ENCODE measurements at regions of chr1 and their contacts with region 1.

Region 1: DNA sequence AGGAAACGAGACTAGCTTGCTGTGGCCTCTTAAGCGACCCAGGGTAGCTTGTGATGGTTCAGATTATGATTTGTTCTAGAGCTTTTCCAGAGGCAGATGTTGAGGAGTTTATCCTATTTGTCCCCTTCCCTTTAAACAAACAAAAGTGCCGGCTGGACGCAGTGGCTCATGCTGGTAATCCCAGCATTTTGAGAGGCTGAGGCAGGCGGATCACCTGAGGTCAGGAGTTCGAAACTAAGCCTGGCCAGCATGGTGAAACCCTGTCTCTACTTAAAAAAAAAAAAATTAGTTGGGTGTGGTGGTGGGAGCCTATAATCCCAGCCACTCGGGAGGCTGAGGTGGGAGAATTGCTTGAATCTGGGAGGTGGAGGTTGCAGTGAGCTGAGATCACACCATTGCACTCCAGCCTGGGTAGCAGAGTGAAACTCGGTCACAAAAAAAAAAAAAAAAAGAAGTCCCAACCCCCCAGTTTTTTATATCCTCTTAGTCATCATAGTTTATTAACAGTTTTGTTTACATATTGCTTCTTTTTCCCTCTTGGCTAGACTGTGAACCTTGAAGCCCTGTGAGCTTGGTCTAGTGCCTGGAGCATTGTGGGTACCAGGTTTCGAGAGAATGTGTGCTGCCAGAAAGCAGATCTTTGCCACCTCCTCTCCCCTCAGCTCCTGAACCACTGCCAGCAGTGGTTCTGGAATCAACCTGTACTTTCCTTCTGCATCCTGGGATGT is 29.8 kb downstream of the MAPKAPK2 start:
- DNase-seq: no peak

Region 2: DNA sequence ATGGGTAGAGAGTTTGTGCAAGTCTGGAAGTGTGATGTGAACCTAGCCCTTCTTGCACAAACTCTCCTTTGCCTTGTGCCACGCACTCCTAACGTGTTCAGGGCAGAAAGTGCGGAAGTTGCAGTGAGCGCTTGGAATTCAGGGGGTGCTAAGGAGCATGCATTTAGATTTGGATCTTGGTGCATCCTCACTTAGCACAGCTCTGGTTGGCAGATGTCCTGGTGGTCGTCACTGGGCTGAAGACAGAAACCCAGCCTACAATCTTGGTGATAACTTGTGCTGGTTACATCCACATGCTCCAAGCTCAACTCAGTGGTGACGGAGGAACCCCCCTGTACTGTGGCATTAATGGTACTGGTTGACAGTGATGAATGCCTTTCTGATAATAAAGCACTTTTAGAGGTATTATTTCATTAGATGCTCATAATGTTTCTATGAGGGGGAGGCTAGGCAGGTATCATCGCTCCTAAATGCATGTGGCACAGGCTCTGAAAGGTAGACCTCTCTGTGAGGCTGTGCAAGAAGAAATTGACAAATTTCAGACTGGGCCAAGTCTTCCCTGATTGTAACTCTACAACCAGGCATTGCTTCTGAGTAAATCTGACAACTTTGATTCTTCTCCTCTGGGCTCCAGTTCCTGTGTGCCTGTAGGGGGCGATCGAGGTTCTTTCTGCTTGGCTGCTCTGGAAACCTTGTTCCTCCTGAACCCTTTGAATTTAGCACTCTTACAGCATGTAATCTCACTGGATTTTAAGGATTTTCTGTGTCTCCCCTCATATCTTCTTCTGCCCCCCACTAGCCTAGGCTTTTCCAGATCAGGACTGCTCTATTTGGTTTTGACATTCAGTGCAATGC is 10.8 kb after region 1 on chr1:
- CTCF ChIA-PET with region 1: interaction called, 15 read pairs
- POLR2A ChIA-PET with region 1: no interaction called
- DNase-seq: peak; percentile 71

Measured in HEK293T (cell line).